Common myeloid progenitor, CD34-positive (primary cell): ENCODE measurements at regions of chr17 and their contacts with region 1.

Region 1: DNA sequence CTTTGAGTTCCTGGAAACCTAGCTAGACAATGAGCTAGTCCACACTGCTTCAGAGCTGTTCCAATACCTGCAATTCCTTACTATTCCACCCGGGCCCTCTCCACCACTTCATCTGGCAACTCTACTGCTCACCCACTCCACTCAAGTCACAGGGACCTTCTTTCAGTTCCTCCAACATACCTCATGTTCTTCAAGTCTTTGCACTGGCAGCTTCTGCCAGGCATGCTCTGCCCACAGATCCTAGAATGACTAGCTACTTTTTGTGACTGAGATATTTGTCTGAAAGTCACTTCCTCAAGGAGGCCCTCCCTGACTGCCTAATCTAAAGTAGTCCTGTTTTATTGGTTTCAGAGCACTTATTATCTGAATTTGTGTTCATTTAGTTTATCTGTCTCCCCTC is 86.4 kb downstream of the TEX14 start:
- DNase-seq: no peak
- H3K4me3 ChIP-seq: no peak overlapping the region
- H3K27ac ChIP-seq: no peak overlapping the region
- H3K4me1 ChIP-seq: peaks cover 0 to 5% (median under 1%) of the 10 kb centered on the region in 4 experiments
- H3K27me3 ChIP-seq: no peaks in the 10 kb centered on the region

Region 2: DNA sequence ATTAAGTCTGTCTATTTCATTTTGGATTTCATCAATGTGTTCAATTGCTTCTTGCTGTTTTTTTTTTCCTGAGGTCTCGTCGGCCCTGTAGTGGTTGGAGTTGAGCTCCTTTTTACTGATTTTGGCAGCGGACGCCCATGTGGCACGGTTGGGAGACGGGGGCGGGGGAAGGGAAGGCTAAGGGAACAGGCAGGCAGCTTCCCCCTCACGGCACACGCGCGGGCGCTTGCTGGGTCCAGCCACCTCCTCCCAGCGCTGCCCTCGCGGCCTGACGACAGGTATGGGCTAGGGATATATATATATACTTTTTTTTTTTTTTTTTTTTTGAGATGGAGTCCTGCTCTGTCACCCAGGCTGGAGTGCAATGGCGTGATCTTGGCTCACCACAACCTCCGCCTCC is 128.7 kb before region 1 on chr17:
- CTCF ChIA-PET with region 1: no interaction called
- POLR2A ChIA-PET with region 1: no interaction called
- DNase-seq: no peak
- H3K4me3 ChIP-seq: no peak overlapping the region
- H3K27ac ChIP-seq: no peak overlapping the region
- H3K4me1 ChIP-seq: no peaks in the 10 kb centered on the region
- H3K27me3 ChIP-seq: no peaks in the 10 kb centered on the region

Region 3: DNA sequence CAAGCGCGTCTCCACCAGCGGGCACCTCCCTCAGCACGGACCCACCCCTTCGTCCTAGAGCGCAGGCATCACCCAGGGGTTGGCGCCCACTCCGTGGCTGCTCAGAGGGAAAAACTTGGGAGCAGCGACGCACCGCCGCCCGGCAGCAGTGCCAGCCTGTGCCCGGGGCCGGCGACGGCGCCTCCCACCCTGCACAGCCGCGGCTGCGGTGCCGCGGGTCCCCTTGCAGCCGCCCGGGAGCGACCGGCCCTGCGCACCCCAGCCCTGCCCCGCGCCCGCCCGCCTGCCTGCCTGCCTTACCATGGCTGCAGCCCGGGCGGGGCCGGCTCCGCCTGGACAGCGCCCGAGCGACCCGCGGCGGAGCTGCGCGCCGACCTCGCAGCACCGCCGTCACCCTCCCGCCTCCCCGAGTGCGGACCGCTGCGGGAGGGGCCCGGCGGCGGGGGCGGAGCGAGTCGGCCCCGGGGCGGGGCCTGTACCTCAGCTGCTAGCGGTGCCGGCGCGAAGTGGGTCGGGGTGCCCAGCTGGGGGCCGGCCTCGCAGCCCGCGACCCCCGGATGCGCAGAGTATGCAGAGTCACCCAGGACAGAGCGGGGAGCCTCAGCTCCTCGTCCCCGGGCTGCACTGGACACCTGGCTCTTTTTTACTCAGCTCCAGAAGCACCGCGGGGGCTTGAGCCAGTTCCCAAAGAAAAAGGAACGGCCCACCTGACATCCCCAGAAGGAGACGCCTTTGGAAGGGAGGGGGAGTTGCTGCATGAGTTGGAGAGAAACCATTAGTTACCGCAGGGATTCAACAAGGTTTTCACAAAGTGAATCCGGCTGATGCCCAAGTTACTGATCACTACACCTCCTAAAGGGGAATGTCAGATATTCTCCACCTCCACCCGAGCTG is 73.6 kb before region 1 on chr17:
- CTCF ChIA-PET with region 1: no interaction called
- POLR2A ChIA-PET with region 1: no interaction called
- DNase-seq: peak in 2 of 3 donors; percentile 60 to 62
- H3K4me3 ChIP-seq: peak overlapping the region; percentile 19 to 72 (median 62)
- H3K27ac ChIP-seq: no peak overlapping the region
- H3K4me1 ChIP-seq: peaks cover 0 to 14% (median 12%) of the 10 kb centered on the region in 4 experiments
- H3K27me3 ChIP-seq: peaks cover 0 to 42% (median 24%) of the 10 kb centered on the region in 5 experiments

Region 4: DNA sequence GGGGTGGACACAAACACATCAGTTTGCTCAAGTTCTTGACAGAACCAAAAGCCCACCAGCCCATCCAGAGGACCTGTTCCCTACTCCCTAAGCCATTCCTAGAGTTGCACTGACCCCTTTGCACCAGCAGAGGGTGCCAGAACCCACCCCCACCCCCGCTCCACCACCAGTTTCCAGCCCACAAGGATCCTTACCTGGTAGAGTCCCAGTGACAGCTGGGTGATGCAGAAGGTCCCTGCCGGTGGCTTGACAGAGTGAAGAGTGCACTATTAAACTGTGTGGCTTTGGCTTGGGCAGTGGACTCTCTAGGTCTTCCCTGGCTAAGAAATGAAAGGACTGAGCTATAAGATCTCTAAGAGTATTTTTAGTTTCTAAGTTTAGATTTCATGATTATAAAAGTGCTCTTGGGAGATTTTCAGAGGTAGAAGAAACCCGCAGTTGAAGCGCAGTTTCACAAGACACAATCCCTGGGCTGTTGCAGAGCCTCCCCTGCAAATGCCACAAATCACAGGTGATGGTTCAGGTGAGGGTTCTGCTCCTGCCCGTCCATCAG is 17.7 kb before region 1 on chr17:
- CTCF ChIA-PET with region 1: interaction called, 13 read pairs
- POLR2A ChIA-PET with region 1: no interaction called
- DNase-seq: peak; percentile 52 to 67 (median 63)
- H3K4me3 ChIP-seq: no peak overlapping the region
- H3K27ac ChIP-seq: no peak overlapping the region
- H3K4me1 ChIP-seq: no peaks in the 10 kb centered on the region
- H3K27me3 ChIP-seq: no peaks in the 10 kb centered on the region